HepG2 (cell line): ENCODE measurements at regions of chr12 and their contacts with region 1.

Region 1: DNA sequence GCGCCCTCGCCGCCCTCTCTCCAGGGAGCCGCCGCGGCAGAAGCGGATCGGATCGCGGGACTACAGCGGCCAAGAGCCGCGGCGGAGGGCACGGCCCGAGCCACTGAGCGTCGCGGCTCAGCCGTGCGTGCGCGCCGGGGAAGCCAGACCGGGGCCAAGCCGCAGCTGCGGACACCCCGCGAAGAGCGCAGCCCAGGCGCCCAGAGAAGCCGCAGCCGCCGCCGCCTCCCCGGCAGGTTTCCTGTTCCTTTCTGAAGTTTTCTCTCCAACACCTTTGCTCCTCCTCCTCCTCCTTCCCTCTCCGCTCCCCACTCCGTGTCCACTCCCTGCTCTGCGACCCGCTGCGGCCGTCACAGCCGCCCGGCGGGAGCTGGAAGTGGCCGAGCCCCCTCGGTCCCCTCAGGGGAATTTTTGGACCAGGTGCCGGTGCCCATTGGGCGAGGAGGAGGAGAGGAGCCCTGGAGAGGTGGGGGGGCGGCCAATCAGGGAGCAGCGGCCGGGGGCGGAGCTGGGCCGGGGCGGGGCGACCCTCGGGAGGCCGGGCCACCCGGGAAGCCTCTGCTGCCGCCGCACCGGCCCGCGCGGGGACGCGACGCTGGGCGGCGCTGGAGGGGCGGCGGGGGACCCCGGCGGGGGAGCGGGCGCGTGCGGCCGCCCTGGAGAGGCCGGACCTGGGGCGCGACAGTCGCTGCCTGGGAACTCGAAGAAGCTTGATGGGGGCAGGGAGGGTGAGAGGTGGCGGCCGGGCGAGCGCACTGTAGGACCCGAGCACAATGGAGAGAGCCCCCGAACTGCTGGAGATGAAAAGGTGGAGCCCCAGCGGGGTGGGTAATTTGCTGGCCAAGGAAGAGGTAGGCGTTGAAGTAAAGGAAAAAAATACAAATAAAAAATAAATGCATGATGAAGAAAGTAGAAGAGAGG is at the start of gene ITPR2:
- DNase-seq: peak; percentile 88
- ATAC-seq: peak; percentile 89
- H3K4me3 ChIP-seq: peak within 1 kb of the TSS; percentile 74 to 98 (median 87)
- H3K27ac ChIP-seq: peak within 1 kb of the TSS; percentile 71
- H3K4me1 ChIP-seq: peaks cover 37% of the 10 kb centered on the region
- H3K27me3 ChIP-seq: no peaks in the 10 kb centered on the region; a peak in 1 of 5 replicates
- CTCF ChIP-seq: peak; percentile 35
- EP300 ChIP-seq: no peak
- POLR2A ChIP-seq: peak; percentile 91
- RAD21 ChIP-seq: peak; percentile 30; the same call in 1 of the 2 replicates
- total RNA-seq, gene ITPR2: 77.6 and 81.9 TPM in 2 replicates

Region 2: GRCh38 chr12:26732005-26732908 is 100.8 kb before region 1 on chr12:
- CTCF ChIA-PET with region 1: no interaction called
- POLR2A ChIA-PET with region 1: interaction called, 42 read pairs
- in situ Hi-C with region 1: no loop called
- intact Hi-C with region 1: loop called (anchors 10 kb)
- DNase-seq: no peak
- ATAC-seq: no peak
- H3K4me3 ChIP-seq: no peak overlapping the region
- H3K27ac ChIP-seq: peak overlapping the region; percentile 52
- H3K4me1 ChIP-seq: peaks cover 99% of the 10 kb centered on the region
- H3K27me3 ChIP-seq: no peaks in the 10 kb centered on the region
- CTCF ChIP-seq: no peak
- EP300 ChIP-seq: no peak
- POLR2A ChIP-seq: no peak
- RAD21 ChIP-seq: no peak

Region 3: DNA sequence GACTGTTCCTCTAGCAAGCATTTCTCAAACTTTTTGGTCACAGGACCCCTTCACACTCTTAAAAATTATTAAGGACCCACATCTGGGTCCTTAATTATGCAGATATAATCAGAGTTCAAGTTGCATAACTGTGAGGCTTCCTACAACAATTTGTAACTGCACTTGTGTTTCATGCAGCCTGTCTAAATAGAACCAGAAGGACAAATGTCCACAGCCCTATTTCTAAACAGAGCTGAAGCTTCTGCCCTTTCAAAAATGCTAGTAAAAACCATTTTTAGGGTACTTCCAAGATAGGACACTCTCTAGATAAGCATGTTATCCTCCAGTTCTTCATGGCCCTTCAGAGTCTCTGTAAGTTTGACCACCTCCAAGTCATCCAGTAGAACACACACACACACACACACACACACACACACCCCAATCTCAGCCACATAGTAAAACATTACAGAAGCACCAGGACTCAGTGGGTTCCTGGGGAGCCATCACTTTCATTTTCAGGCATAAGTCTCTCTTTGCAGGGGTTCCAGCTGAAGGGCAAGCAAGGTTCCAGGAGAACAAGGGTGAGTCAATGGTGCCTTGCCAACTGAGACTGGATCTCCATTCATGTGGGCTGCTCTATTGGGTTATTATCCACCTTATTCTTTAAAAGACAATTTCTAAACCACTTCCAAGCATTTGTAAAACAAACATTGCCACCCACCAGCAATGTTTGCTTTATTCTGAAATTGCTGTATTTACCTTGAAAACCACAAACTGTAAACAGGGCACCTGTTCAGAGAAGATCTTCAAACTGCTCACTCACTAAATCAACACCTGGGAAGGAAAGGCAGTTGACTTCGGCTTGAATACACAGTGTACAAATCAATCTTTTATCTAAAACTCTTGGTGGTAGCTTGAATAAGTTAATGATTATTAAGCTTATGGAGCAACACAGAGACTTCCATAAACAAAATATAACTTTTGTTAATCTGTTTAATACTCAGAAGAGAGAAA is 64.2 kb before region 1 on chr12:
- CTCF ChIA-PET with region 1: no interaction called
- POLR2A ChIA-PET with region 1: interaction called, 48 read pairs
- in situ Hi-C with region 1: no loop called
- intact Hi-C with region 1: no loop called
- DNase-seq: peak; percentile 98
- ATAC-seq: peak; percentile 90
- H3K4me3 ChIP-seq: peak overlapping the region in 2 of 3 experiments; percentile 11 to 22; a peak in 3 of 6 replicates
- H3K27ac ChIP-seq: peak overlapping the region; percentile 88
- H3K4me1 ChIP-seq: peaks cover 96% of the 10 kb centered on the region
- H3K27me3 ChIP-seq: no peaks in the 10 kb centered on the region
- CTCF ChIP-seq: no peak
- EP300 ChIP-seq: peak; percentile 95 to 100; a peak in 3 of 4 replicates
- POLR2A ChIP-seq: peak; percentile 24 to 35; a peak in 1 of 4 replicates
- RAD21 ChIP-seq: peak; percentile 16; the same call in 1 of the 2 replicates

Region 4: DNA sequence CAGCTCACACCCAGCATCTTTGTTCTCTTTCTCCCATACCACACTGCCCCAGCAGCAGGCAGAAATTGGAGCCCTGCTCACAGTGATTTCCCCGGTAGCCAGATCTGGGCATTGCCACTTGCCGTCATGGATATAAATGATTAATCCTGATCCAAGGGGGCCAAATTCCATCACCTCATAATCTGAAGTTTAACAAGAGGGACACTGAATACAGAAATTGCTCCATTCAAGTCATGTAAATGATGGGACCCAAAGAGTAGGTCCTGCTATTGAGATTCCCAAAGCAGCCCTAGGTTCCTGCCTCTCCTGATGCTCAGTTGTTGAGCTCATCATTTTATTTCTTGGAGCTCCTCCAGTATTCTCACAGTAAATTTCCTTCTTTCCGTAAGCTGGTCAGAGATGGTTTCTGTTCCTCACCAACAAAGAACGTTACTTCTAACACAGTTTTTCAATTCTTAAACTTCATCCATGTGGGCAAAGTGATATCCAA is 11.8 kb before region 1 on chr12:
- CTCF ChIA-PET with region 1: no interaction called
- POLR2A ChIA-PET with region 1: interaction called, 28 read pairs
- in situ Hi-C with region 1: no loop called
- intact Hi-C with region 1: loop called (anchors 1 kb)
- DNase-seq: no peak
- ATAC-seq: no peak
- H3K4me3 ChIP-seq: no peak overlapping the region
- H3K27ac ChIP-seq: no peak overlapping the region
- H3K4me1 ChIP-seq: peaks cover 97% of the 10 kb centered on the region
- H3K27me3 ChIP-seq: no peaks in the 10 kb centered on the region
- CTCF ChIP-seq: no peak
- EP300 ChIP-seq: no peak
- POLR2A ChIP-seq: no peak
- RAD21 ChIP-seq: no peak

Region 5: GRCh38 chr12:26845057-26845666 is 12.1 kb after region 1 on chr12:
- CTCF ChIA-PET with region 1: interaction called, 9 read pairs
- POLR2A ChIA-PET with region 1: interaction called, 13 read pairs
- in situ Hi-C with region 1: no loop called
- intact Hi-C with region 1: loop called (anchors 1 kb)
- DNase-seq: peak; percentile 51
- ATAC-seq: peak; percentile 87
- H3K4me3 ChIP-seq: peak overlapping the region in 1 of 3 experiments; percentile 10; a peak in 2 of 6 replicates
- H3K27ac ChIP-seq: no peak overlapping the region
- H3K4me1 ChIP-seq: peaks cover 31% of the 10 kb centered on the region
- H3K27me3 ChIP-seq: no peaks in the 10 kb centered on the region
- CTCF ChIP-seq: peak; percentile 67
- EP300 ChIP-seq: no peak
- POLR2A ChIP-seq: no peak
- RAD21 ChIP-seq: no peak

Region 6: DNA sequence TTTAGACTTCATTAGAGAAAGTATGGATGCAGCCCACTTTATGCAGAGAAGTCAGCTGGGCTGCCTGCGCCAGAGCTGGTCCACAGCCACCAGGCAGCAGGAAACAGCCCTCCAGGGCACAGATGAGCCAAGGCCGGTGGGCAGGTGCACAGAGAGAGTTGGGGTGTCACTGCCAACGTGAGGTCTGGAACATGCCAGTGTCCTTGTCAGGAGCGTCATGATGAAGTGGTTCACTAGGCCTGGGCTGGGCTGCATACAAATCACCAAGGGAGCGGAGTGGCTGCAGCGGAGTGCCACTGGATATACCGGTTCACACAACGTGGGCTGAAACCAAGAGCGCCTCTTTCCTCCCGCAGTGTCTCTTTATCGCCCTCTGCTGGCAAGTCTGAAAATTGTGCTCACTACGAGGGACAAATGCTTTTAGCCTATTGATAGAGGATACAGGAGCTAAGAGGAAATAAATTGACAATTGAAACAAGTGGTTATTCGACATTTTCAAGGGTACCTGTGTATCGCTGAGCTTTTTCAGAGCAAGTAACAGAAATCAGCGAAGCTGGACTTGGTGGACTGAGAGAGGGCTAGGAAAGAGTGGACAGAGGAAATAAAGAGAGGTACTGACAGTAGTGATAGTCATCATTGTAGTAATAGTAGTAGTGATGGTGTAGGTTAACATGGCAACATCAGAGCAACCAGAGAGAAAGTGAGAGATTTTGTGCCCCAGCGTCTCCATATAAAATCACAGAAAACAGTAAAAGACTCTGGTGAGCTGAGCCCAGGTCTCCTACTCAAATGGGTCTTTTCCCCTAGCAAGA is 51.9 kb after region 1 on chr12:
- CTCF ChIA-PET with region 1: no interaction called
- POLR2A ChIA-PET with region 1: no interaction called
- in situ Hi-C with region 1: no loop called
- intact Hi-C with region 1: loop called (anchors 1 kb)
- DNase-seq: peak; percentile 78
- ATAC-seq: peak; percentile 95
- H3K4me3 ChIP-seq: peak overlapping the region; percentile 32 to 65 (median 35); a peak in 4 of 6 replicates
- H3K27ac ChIP-seq: no peak overlapping the region
- H3K4me1 ChIP-seq: 0 out of 2 replicates have a peak, but pooled peaks cover 5% of the 10 kb centered on the region
- H3K27me3 ChIP-seq: no peaks in the 10 kb centered on the region
- CTCF ChIP-seq: peak; percentile 95
- EP300 ChIP-seq: no peak
- POLR2A ChIP-seq: no peak
- RAD21 ChIP-seq: peak; percentile 79

Region 7: DNA sequence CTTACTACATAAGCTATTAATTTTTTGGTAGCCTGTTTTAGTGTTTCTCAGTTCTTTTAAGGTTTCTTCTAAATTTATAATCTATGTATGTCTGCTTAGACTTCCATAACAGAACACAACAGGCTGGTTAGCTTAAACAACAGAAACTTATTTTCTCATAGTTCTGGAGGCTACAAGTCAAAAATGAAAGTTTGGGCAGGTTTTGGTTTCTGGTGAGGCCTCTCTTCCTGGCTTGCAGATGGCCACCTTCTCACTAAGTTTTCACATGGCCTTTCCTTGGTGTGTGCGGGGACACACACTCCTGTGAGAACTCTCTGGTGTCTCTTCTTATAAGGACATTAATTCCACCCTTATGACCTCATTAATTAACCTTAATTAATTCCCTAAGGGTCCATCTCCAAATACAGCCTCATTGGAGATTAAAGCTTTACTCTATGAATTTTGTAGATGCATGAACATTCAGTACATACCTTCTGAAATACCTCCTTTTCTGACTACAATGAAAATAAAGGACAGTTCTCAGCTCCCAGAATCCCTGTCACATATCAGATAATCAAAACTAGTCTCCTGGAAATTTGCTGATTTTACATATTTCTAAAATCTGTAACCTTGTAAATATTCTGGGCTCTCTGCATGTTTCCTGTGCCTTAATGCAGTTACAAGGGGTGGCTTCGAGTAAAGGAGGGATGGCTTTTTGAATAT is 476.4 kb after region 1 on chr12:
- CTCF ChIA-PET with region 1: no interaction called
- POLR2A ChIA-PET with region 1: no interaction called
- in situ Hi-C with region 1: no loop called
- intact Hi-C with region 1: no loop called
- DNase-seq: no peak
- ATAC-seq: no peak
- H3K4me3 ChIP-seq: no peak overlapping the region
- H3K27ac ChIP-seq: no peak overlapping the region
- H3K4me1 ChIP-seq: no peaks in the 10 kb centered on the region
- H3K27me3 ChIP-seq: no peaks in the 10 kb centered on the region; a peak in 1 of 5 replicates
- CTCF ChIP-seq: no peak
- EP300 ChIP-seq: no peak
- POLR2A ChIP-seq: no peak
- RAD21 ChIP-seq: no peak